Transverse colon (tissue), 4 donors: ENCODE measurements at regions of chr3 and their contacts with region 1.

Region 1: GRCh38 chr3:120558771-120559241 is 37.3 kb upstream of the NDUFB4 start:
- DNase-seq: peak; percentile 91
- H3K4me3 ChIP-seq: peak overlapping the region; percentile 19 to 52 (median 32)
- H3K27ac ChIP-seq: peak overlapping the region; percentile 77 to 90 (median 82)
- H3K4me1 ChIP-seq: peaks cover 0 to 38% (median 12%) of the 10 kb centered on the region in 4 donors
- H3K27me3 ChIP-seq: no peaks in the 10 kb centered on the region
- CTCF ChIP-seq: peak; percentile 99 to 100 (median 99)
- EP300 ChIP-seq: no peak
- POLR2A ChIP-seq: no peak

Region 2: GRCh38 chr3:119891944-119892721 is 666.7 kb before region 1 on chr3:
- in situ Hi-C with region 1: loop called in 1 of 4 experiments (anchors 25 kb)
- intact Hi-C with region 1: no loop called
- DNase-seq: peak; percentile 15
- H3K4me3 ChIP-seq: no peak overlapping the region
- H3K27ac ChIP-seq: peak overlapping the region in 3 of 4 donors; percentile 18 to 31 (median 23)
- H3K4me1 ChIP-seq: peaks cover 0 to 10% (median 0%) of the 10 kb centered on the region in 4 donors
- H3K27me3 ChIP-seq: no peaks in the 10 kb centered on the region
- CTCF ChIP-seq: peak; percentile 59 to 67 (median 64)
- EP300 ChIP-seq: no peak
- POLR2A ChIP-seq: no peak

Region 3: GRCh38 chr3:120227710-120228347 is 331.0 kb before region 1 on chr3:
- in situ Hi-C with region 1: loop called in 1 of 4 experiments (anchors 25 kb)
- intact Hi-C with region 1: no loop called
- DNase-seq: no peak
- H3K4me3 ChIP-seq: no peak overlapping the region
- H3K27ac ChIP-seq: no peak overlapping the region
- H3K4me1 ChIP-seq: no peaks in the 10 kb centered on the region
- H3K27me3 ChIP-seq: no peaks in the 10 kb centered on the region
- CTCF ChIP-seq: no peak
- EP300 ChIP-seq: no peak
- POLR2A ChIP-seq: no peak

Region 4: GRCh38 chr3:120245386-120245785 is 313.4 kb before region 1 on chr3:
- in situ Hi-C with region 1: loop called in 3 of 4 experiments (anchors 10 to 25 kb)
- intact Hi-C with region 1: loop called (anchors 10 kb)
- DNase-seq: no peak
- H3K4me3 ChIP-seq: no peak overlapping the region
- H3K27ac ChIP-seq: no peak overlapping the region
- H3K4me1 ChIP-seq: peaks cover 0 to 4% (median 0%) of the 10 kb centered on the region in 4 donors
- H3K27me3 ChIP-seq: no peaks in the 10 kb centered on the region
- CTCF ChIP-seq: no peak
- EP300 ChIP-seq: no peak
- POLR2A ChIP-seq: no peak

Region 5: GRCh38 chr3:120417272-120417911 is 141.4 kb before region 1 on chr3:
- in situ Hi-C with region 1: loop called (anchors 10 to 25 kb)
- intact Hi-C with region 1: loop called (anchors 5 kb)
- DNase-seq: peak; percentile 96
- H3K4me3 ChIP-seq: peak overlapping the region in 1 of 4 donors; percentile 32
- H3K27ac ChIP-seq: peak overlapping the region; percentile 69 to 84 (median 80)
- H3K4me1 ChIP-seq: peaks cover 18 to 62% (median 31%) of the 10 kb centered on the region in 4 donors
- H3K27me3 ChIP-seq: no peaks in the 10 kb centered on the region
- CTCF ChIP-seq: peak; percentile 78 to 93 (median 85)
- EP300 ChIP-seq: no peak
- POLR2A ChIP-seq: no peak

Region 6: GRCh38 chr3:120536642-120537041 is 22.2 kb before region 1 on chr3:
- in situ Hi-C with region 1: no loop called
- intact Hi-C with region 1: no loop called
- DNase-seq: peak; percentile 17
- H3K4me3 ChIP-seq: no peak overlapping the region
- H3K27ac ChIP-seq: no peak overlapping the region
- H3K4me1 ChIP-seq: peaks cover 0 to 7% (median 3%) of the 10 kb centered on the region in 4 donors
- H3K27me3 ChIP-seq: no peaks in the 10 kb centered on the region
- CTCF ChIP-seq: no peak
- EP300 ChIP-seq: no peak
- POLR2A ChIP-seq: no peak

Region 7: DNA sequence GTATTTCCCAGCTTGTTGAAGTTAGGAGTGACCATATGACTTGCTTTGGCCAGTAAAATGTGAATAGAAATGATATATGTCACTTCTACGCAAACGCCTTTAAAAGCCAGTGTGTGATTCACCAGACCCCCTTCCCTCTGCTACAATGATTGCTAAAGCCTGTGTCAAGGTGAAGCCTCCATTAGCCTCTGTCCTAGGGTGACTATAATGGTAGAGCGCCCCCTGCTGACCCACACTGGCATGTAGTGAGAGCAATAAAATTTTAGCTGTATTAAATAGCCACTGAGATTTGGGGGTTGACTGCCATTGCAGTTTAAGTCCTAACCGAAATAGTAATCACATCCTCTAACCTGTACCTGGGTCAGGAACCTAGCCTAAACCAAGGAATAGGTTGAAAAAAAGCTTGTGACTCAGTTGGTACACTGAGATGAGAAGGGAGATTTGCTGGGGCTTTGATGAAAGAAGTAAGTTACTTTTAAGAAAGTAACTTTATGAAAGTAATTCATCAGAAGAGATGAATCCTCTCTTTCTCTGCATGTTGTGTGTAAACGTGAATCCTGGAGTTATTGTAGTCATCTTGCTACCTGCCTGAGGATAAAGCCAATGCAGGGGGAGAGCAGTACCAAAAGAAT is 236.3 kb after region 1 on chr3:
- in situ Hi-C with region 1: loop called (anchors 5 to 25 kb)
- intact Hi-C with region 1: loop called (anchors 2 kb)
- DNase-seq: peak; percentile 80
- H3K4me3 ChIP-seq: no peak overlapping the region
- H3K27ac ChIP-seq: no peak overlapping the region
- H3K4me1 ChIP-seq: peaks cover 0 to 38% (median 21%) of the 10 kb centered on the region in 4 donors
- H3K27me3 ChIP-seq: no peaks in the 10 kb centered on the region
- CTCF ChIP-seq: peak; percentile 61 to 70 (median 68)
- EP300 ChIP-seq: no peak
- POLR2A ChIP-seq: no peak